GM10248 (cell line): ENCODE measurements at regions of chr2 and their contacts with region 1.

Region 1: GRCh38 chr2:233061591-233062450 is 1.7 kb downstream of the INPP5D start:
- DNase-seq: peak; percentile 71
- CTCF ChIP-seq: peak; percentile 44

Region 2: DNA sequence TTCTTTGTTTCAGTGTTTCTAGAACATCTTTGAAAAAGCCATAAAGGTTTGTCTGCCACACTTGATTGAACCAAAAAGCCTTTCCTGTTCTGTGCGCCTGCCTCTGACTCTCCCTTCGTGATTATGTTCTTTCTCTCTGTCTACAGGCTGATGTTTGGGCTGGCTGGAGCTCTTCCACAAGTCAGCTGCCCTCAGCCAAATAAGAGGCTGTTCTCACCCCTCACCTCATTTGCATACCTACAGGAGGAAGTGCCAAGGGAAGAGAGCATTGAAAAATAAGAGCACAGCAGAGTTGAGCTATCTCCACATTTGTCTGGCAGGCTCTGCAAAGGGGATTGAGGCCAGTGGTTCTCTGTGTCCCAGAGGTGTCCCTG is 14.1 kb after region 1 on chr2:
- CTCF ChIA-PET with region 1: interaction called, 55 read pairs
- POLR2A ChIA-PET with region 1: interaction called, 11 read pairs
- DNase-seq: no peak
- CTCF ChIP-seq: no peak

Region 3: GRCh38 chr2:233084488-233084887 is 22.7 kb after region 1 on chr2:
- CTCF ChIA-PET with region 1: interaction called, 55 read pairs
- POLR2A ChIA-PET with region 1: interaction called, 28 read pairs
- DNase-seq: no peak
- CTCF ChIP-seq: no peak

Region 4: DNA sequence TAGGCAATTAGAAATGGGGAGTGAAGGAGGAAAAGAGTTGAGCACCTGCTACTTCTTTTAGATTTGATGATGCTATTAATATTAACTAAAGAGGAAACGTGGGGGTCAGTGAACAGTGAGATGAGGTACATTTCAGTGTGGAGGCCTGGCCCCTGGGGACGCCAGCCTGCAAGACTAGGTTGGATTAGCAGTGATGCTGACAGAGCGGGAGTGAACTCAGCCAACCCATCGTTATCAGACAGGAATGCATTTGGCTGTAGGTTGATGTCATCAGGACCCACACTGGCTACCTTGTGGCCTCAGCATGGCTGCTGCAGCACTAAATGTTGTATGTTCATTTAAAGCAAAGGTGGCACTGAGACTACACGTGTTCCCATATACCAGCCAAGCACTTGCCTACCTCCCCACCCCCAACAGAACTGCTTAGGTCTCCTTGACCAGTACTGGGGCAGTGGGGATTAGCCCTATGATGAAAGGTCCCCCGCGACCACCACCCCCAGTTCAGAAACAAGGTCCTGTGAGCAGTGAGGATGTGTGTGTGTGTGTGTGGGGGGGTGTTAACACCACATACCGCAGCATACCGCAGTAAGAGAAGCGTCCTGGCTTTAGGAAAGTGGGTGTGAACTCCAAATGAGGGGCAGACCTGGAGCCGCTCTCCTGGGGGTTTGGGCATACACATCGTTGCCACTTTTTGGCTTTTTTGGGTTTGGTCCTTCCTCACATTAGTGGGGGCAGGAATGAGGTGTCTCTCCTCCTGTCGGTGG is 318.5 kb after region 1 on chr2:
- CTCF ChIA-PET with region 1: no interaction called
- POLR2A ChIA-PET with region 1: no interaction called
- DNase-seq: no peak
- CTCF ChIP-seq: no peak